Naive thymus-derived CD8-positive, alpha-beta T cell (primary cell): ENCODE measurements at regions of chr1 and their contacts with region 1.

Region 1: DNA sequence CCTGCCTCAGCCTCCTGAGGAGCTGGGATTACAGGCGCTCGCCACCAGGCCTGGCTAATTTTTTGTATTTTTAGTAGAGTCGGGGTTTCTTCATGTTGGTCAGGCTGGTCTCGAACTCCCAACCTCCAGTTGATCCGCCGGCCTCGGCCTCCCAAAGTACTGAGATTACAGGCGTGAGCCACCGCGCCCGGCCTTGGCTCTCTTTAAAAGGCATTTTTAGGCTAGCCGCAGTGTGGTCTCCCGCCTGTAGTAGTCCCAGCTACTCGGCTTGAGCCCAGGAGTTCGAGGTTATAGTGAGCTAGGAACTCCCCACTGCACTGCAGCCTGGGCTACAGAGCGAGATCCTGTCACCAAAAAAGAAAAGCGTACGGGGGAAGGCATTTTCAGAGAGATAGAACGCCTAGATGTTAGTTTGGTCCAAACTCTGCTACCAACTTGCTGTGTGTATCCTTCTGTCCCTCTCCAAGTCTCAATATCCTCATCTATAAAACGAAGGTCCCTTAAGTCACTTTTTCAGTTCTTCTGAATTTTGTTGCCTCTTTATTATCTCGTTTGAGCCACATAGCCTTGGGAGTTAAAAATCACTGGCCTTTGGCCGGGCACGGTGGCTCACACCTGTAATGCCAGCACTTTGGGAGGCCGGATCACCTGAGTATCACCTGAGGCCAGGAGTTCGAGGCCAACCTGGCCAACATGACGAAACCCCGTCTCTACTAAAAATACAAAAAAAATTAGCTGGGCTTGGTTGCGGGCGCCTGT is 734 bp downstream of the MED18 start:
- DNase-seq: peak in 1 of 10 donors; percentile 21
- ATAC-seq: peak; percentile 9 to 14
- H3K4me3 Mint-ChIP-seq: peak overlapping the region; percentile 89 to 98 (median 94)
- H3K27ac Mint-ChIP-seq: peak overlapping the region; percentile 94 to 99 (median 98)
- H3K4me1 Mint-ChIP-seq: peaks cover 17 to 54% (median 42%) of the 10 kb centered on the region in 4 donors
- H3K27me3 Mint-ChIP-seq: peaks cover 0 to 4% (median 0%) of the 10 kb centered on the region in 5 donors

Region 2: DNA sequence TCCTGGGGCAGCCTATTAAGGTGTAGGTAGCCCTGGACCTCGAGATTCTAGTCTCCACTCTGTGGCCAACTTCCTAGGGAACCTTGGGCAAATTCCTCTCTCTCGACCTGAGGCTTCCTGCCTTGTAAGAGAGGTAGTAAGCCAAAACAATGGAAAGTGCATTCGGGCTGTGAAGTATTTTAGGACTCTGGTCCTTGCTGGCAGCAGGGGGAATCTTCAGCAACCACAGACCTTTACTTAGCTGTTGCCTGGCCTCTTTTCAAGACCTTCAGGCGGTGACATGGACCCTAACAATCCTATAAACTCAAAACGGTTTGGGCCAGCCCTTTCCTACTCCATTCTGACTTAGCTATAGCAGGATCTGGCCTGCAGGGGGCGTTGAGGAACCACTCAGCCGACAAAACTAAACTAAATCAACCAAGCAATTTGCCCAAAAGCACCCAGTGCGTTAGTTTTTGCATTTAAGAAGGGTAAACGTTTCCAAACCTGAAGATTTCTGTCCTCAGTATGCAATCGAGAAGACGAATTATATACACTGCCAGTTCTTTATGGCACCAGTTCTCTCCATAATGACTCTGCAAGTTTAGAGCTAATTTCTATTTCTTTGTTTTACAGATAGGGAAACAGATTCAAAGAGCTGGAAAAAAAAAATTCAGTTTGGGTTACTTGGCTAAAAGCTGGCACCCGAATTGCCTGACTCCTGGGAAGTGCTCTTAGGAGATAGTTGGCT is 81.1 kb before region 1 on chr1:
- POLR2A ChIA-PET with region 1: interaction called, 48 read pairs
- DNase-seq: peak; percentile 61 to 89 (median 78)
- ATAC-seq: peak in 1 of 2 donors; percentile 18
- H3K4me3 Mint-ChIP-seq: peak overlapping the region; percentile 68 to 98 (median 84)
- H3K27ac Mint-ChIP-seq: peak overlapping the region; percentile 92 to 98 (median 94)
- H3K4me1 Mint-ChIP-seq: peaks cover 23 to 59% (median 47%) of the 10 kb centered on the region in 4 donors
- H3K27me3 Mint-ChIP-seq: no peaks in the 10 kb centered on the region

Region 3: DNA sequence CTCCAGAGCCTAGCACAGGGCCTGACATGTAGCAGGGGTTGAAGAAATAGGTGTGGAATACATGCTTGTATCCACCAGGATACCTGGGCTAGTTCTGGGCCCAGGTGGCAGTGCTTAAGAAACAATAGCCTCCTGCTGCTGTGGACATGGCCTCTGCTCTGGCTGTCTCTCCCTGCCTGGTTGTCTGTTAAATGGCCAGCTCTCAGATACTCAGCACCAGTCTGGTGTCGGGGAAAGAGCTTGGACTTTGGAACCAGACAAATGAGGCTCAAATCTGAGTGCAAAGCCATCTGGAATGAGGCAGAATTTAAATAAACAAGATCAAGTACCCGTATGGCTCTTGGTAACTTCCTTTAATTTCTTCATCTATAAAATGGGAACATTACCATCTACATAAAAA is 38.7 kb before region 1 on chr1:
- POLR2A ChIA-PET with region 1: no interaction called
- DNase-seq: no peak
- ATAC-seq: no peak
- H3K4me3 Mint-ChIP-seq: no peak overlapping the region
- H3K27ac Mint-ChIP-seq: peak overlapping the region in 1 of 10 donors; percentile 11
- H3K4me1 Mint-ChIP-seq: peaks cover 0 to 4% (median 0%) of the 10 kb centered on the region in 4 donors
- H3K27me3 Mint-ChIP-seq: no peaks in the 10 kb centered on the region

Region 4: DNA sequence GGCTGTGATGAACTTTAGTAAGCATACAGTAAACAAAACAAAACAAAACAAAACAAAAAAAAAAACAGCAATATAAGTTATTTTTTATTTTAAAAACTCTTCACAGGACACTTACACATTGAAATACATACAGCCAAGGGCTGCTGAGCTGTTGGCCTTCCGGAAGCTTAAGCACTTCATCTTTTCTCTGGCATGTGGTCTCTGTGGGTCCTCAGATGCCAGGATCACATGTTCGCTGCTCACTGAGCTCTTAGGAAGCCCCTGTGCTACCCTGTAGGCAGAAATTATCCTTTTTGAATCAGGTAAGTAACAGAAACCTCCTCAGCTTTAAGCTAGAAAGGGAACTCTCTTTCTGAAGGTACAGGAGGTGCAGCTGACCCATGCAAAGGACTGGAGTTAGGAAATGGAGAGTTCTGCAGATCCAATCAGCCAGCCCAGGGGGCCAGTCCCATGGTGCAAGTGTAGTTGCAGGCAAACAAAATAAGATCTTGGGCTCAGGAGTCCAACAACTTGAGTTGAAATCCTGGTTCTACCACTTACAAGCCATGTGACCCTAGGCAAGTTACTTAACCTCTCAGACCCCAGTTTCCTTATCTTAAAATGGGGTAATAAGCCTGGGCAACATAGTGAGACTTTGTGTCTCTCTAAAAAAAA is 23.1 kb before region 1 on chr1:
- POLR2A ChIA-PET with region 1: no interaction called
- DNase-seq: peak in 2 of 10 donors; percentile 3 to 6
- ATAC-seq: peak in 1 of 2 donors; percentile 44
- H3K4me3 Mint-ChIP-seq: no peak overlapping the region
- H3K27ac Mint-ChIP-seq: peak overlapping the region in 2 of 10 donors; percentile 79 to 81
- H3K4me1 Mint-ChIP-seq: peaks cover 0 to 1% (median 0%) of the 10 kb centered on the region in 4 donors
- H3K27me3 Mint-ChIP-seq: no peaks in the 10 kb centered on the region

Region 5: GRCh38 chr1:28359592-28360239 is 30.1 kb after region 1 on chr1:
- POLR2A ChIA-PET with region 1: interaction called, 10 read pairs
- DNase-seq: peak; percentile 52 to 83 (median 64)
- ATAC-seq: peak; percentile 86 to 91
- H3K4me3 Mint-ChIP-seq: no peak overlapping the region
- H3K27ac Mint-ChIP-seq: peak overlapping the region in 2 of 10 donors; percentile 8 to 9
- H3K4me1 Mint-ChIP-seq: peaks cover 0 to 2% (median 1%) of the 10 kb centered on the region in 4 donors
- H3K27me3 Mint-ChIP-seq: no peaks in the 10 kb centered on the region

Region 6: DNA sequence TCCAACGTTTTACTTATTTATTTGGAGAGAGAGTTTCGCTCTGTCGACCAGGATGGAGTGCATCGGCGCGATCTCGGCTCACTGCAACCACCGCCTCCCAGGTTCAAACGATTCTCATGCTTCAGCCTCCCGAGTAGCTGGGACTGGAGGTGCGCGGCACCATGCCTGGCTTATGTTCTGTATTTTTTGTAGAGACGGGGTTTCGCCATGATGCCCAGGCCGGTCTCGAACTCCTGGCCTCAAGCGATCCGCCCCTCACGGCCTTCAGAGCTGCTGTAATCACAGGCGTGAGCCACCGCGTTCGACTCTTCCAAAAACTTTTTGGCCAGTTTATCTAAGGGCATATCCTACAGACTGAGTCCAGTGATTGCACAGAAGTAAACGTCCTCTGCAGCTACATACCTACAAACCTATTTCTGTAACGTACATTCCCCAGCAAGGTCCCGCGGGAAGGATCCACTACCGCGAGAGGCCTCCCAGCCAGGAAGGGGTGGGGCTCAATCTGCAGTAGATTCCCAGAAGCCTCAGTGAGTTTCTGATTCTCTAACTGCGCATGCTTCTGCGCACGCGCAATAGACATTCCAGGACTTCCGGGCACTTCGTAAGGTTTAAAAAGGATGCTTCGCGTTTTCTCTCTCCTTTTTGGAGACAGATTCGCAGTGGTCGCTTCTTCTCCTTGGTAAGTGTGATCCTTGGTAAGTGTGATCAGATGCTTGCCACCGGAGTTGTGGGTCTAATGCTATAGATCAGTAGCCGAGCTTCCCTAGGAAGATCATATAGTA is 176.0 kb after region 1 on chr1 and contains the start of gene RCC1:
- POLR2A ChIA-PET with region 1: interaction called, 10 read pairs
- DNase-seq: peak; percentile 84 to 98 (median 95)
- ATAC-seq: peak; percentile 91 to 94
- H3K4me3 Mint-ChIP-seq: peak within 1 kb of the TSS; percentile 94 to 99 (median 98)
- H3K27ac Mint-ChIP-seq: peak within 1 kb of the TSS; percentile 97 to 100 (median 98)
- H3K4me1 Mint-ChIP-seq: peaks cover 15 to 52% (median 38%) of the 10 kb centered on the region in 4 donors
- H3K27me3 Mint-ChIP-seq: no peaks in the 10 kb centered on the region
- polyA plus RNA-seq, gene RCC1: 11.7 to 16.1 (median 12.2) TPM

Region 7: DNA sequence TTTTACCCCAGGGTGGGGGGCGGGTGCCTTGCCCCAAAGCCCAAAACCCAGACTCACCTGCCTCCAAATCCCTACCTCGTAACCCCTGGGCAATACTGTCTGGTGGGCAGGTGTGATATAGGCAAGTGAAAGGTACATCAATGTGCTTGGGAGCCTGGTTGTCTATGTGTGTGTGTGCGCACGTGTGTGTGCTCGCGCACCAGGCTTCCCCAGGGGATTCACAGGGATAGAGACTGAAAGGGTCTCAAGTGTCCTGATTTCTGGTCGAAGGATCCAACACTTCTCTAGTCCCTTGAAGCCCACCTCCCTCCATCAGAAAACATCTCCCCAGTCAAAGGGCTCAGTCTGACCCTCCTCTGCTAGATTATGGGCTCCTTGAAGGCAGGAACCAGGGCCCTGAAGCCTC is 555.9 kb after region 1 on chr1:
- POLR2A ChIA-PET with region 1: interaction called, 11 read pairs
- DNase-seq: no peak
- ATAC-seq: no peak
- H3K4me3 Mint-ChIP-seq: peak overlapping the region in 6 of 10 donors; percentile 8 to 92 (median 83)
- H3K27ac Mint-ChIP-seq: peak overlapping the region in 9 of 10 donors; percentile 80 to 97 (median 94)
- H3K4me1 Mint-ChIP-seq: peaks cover 27 to 68% (median 62%) of the 10 kb centered on the region in 4 donors
- H3K27me3 Mint-ChIP-seq: no peaks in the 10 kb centered on the region